Activated CD4-positive, alpha-beta memory T cell treated with anti-CD3 and anti-CD28 coated beads, Interleukin-2, amount 10 ng/mL, durations not matched to agents 7 days and 5 days (primary cell): ENCODE measurements at regions of chr19 and their contacts with region 1.

Region 1: DNA sequence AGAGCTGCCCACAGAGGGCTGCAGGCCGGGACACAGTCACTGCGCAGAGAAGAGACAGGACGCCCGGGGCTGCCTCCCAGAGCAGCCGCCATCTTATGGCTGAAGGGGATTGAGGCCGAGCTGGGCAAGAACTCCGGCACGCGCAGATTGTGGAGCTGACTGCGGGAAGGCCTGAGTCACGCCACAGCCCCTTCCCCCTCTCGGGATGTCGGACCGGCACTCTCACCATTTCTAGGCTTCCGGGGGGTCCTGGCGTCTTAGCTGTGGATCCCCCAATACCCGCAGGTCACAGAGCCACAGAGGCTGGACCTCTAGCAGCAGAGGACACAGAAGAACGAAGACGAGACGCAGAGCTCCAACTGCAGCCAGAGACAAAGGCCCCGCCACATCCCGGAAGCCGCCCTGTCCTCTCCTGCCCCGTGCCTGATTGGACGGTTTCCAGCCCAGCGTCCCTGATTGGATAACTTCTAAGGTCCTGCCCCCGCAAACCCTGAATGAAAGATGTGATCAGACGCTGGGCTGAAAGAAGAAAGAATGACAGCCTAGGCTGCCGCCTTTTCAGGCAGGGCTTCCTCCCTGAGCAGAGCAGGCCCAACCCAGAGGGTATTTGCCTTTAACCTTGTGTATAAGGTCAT is at the start of gene ZNF43:
- DNase-seq: peak; percentile 93
- H3K4me3 Mint-ChIP-seq: peak within 1 kb of the TSS; percentile 94
- H3K27ac Mint-ChIP-seq: peak within 1 kb of the TSS; percentile 96
- H3K4me1 Mint-ChIP-seq: peaks cover 17% of the 10 kb centered on the region
- H3K27me3 Mint-ChIP-seq: no peaks in the 10 kb centered on the region
- total RNA-seq, gene ZNF43: 21.3 to 22.9 TPM

Region 2: DNA sequence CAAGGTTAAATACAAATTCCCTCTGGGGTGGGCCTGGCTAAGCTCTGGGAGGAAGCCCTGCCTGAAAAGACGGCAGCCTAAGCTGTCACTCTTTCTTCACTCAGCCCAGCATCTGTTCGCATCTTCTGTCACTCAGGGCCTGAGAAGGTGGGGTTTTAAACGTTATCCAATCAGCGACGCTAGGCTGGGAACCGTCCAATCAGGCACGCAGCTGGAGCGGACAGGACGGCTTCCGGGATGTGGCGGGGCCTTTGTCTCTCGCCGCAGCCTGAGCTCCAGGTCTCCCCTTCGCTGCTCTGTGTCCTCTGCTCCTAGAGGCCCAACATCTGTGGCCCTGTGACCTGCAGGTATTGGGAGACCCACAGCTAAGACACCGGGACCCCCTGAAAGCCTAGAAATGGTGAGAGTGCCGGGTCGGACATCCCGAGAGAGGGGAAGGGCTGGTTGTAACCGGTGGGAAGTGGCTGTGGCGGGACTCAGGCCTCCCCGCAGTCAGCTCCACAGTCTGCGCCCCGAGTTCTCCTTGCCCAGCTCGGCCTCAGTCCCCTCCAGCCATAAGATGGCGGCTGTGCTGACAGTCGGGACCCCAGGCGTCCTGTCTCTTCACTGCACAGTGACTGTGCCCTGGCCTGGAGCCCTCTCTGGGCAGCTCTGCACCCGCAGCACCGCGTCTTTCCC is 694.0 kb before region 1 on chr19 and contains the start of gene ZNF431:
- CTCF ChIA-PET with region 1: no interaction called
- POLR2A ChIA-PET with region 1: interaction called, 13 read pairs
- DNase-seq: peak; percentile 93
- H3K4me3 Mint-ChIP-seq: peak within 1 kb of the TSS; percentile 96
- H3K27ac Mint-ChIP-seq: peak within 1 kb of the TSS; percentile 91
- H3K4me1 Mint-ChIP-seq: peaks cover 22% of the 10 kb centered on the region
- H3K27me3 Mint-ChIP-seq: no peaks in the 10 kb centered on the region
- total RNA-seq, gene ZNF431: 16.1 to 20.5 TPM

Region 3: GRCh38 chr19:21674454-21674853 is 161.5 kb before region 1 on chr19:
- CTCF ChIA-PET with region 1: no interaction called
- POLR2A ChIA-PET with region 1: no interaction called
- DNase-seq: no peak
- H3K4me3 Mint-ChIP-seq: no peak overlapping the region
- H3K27ac Mint-ChIP-seq: no peak overlapping the region
- H3K4me1 Mint-ChIP-seq: no peaks in the 10 kb centered on the region
- H3K27me3 Mint-ChIP-seq: no peaks in the 10 kb centered on the region

Region 4: GRCh38 chr19:21699197-21699596 is 136.7 kb before region 1 on chr19:
- CTCF ChIA-PET with region 1: no interaction called
- POLR2A ChIA-PET with region 1: no interaction called
- DNase-seq: no peak
- H3K4me3 Mint-ChIP-seq: no peak overlapping the region
- H3K27ac Mint-ChIP-seq: no peak overlapping the region
- H3K4me1 Mint-ChIP-seq: no peaks in the 10 kb centered on the region
- H3K27me3 Mint-ChIP-seq: no peaks in the 10 kb centered on the region

Region 5: GRCh38 chr19:21767065-21767800 is 68.7 kb before region 1 on chr19 and contains the start of gene ZNF100:
- CTCF ChIA-PET with region 1: interaction called, 3 read pairs
- POLR2A ChIA-PET with region 1: interaction called, 37 read pairs
- DNase-seq: peak; percentile 88
- H3K4me3 Mint-ChIP-seq: peak within 1 kb of the TSS; percentile 93
- H3K27ac Mint-ChIP-seq: peak within 1 kb of the TSS; percentile 80
- H3K4me1 Mint-ChIP-seq: peaks cover 18% of the 10 kb centered on the region
- H3K27me3 Mint-ChIP-seq: no peaks in the 10 kb centered on the region
- total RNA-seq, gene ZNF100: 18.9 to 19.5 TPM

Region 6: GRCh38 chr19:21851596-21852345 is 15.8 kb after region 1 on chr19:
- CTCF ChIA-PET with region 1: interaction called, 10 read pairs
- POLR2A ChIA-PET with region 1: interaction called, 106 read pairs
- DNase-seq: peak; percentile 89
- H3K4me3 Mint-ChIP-seq: peak overlapping the region; percentile 89
- H3K27ac Mint-ChIP-seq: peak overlapping the region; percentile 83
- H3K4me1 Mint-ChIP-seq: peaks cover 16% of the 10 kb centered on the region
- H3K27me3 Mint-ChIP-seq: no peaks in the 10 kb centered on the region

Region 7: DNA sequence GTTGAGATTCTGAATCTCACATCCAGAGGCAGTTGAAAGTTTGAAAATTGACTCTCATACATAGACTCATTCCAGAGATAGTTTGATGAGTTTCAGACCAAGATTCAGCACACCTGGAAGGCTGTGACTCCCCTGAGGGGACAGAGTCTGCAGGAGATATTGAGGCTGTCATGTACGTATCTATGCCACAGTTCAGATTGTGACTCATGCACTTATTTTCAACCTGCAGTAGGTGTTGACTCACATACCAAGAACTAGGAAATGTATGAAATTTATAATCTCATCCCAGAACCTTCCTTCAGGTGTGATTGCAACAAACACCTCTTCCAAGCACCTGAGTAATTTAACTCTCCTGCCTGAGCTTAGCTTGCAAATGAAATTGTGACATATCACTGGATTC is 64.4 kb after region 1 on chr19:
- CTCF ChIA-PET with region 1: no interaction called
- POLR2A ChIA-PET with region 1: no interaction called
- DNase-seq: no peak
- H3K4me3 Mint-ChIP-seq: no peak overlapping the region
- H3K27ac Mint-ChIP-seq: no peak overlapping the region
- H3K4me1 Mint-ChIP-seq: no peaks in the 10 kb centered on the region
- H3K27me3 Mint-ChIP-seq: no peaks in the 10 kb centered on the region

Region 8: DNA sequence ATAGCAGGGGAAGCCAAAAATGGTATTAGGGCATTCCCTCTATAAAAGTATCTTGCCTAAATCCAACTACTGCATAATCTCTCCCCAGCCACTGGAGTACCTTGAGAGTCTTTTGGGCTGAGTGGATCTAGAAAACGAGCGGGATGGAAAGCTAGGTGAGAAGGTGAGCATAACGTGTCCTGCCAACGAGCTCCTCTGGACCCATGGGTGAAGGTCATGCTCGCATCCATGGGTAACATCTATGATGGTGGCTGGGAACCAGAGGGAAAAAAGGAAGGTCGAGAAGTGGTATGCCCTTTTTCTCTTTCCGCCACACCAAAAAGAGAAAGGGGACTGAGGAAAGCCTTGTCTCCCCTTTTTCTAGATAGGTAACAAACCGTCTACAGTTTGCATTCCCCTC is 111.8 kb after region 1 on chr19:
- CTCF ChIA-PET with region 1: no interaction called
- POLR2A ChIA-PET with region 1: no interaction called
- DNase-seq: no peak
- H3K4me3 Mint-ChIP-seq: no peak overlapping the region
- H3K27ac Mint-ChIP-seq: no peak overlapping the region
- H3K4me1 Mint-ChIP-seq: no peaks in the 10 kb centered on the region
- H3K27me3 Mint-ChIP-seq: no peaks in the 10 kb centered on the region

Region 9: DNA sequence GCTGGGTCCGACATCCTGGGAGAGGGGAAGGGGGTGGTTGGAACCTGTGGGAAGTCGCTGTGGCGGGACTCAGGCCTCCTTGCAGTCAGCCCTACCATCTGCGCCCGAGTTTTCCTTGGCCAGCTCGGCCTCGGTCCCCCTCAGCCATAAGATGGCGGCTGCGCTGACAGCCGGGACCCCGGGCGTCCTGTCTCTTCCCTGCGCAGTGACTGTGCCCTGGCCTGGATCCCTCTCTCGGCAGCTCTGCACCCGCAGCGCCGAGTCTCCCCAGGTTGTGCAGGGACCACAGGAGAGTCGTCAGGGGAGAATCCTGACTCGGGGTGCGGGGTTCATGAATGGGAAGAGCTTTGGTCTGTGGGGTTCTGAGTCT is 216.7 kb after region 1 on chr19:
- CTCF ChIA-PET with region 1: no interaction called
- POLR2A ChIA-PET with region 1: interaction called, 19 read pairs
- DNase-seq: peak; percentile 31
- H3K4me3 Mint-ChIP-seq: peak overlapping the region; percentile 91
- H3K27ac Mint-ChIP-seq: peak overlapping the region; percentile 85
- H3K4me1 Mint-ChIP-seq: peaks cover 5% of the 10 kb centered on the region
- H3K27me3 Mint-ChIP-seq: no peaks in the 10 kb centered on the region